ENCODE measurements at regions of chr4 and their contacts with region 1.

Region 1: DNA sequence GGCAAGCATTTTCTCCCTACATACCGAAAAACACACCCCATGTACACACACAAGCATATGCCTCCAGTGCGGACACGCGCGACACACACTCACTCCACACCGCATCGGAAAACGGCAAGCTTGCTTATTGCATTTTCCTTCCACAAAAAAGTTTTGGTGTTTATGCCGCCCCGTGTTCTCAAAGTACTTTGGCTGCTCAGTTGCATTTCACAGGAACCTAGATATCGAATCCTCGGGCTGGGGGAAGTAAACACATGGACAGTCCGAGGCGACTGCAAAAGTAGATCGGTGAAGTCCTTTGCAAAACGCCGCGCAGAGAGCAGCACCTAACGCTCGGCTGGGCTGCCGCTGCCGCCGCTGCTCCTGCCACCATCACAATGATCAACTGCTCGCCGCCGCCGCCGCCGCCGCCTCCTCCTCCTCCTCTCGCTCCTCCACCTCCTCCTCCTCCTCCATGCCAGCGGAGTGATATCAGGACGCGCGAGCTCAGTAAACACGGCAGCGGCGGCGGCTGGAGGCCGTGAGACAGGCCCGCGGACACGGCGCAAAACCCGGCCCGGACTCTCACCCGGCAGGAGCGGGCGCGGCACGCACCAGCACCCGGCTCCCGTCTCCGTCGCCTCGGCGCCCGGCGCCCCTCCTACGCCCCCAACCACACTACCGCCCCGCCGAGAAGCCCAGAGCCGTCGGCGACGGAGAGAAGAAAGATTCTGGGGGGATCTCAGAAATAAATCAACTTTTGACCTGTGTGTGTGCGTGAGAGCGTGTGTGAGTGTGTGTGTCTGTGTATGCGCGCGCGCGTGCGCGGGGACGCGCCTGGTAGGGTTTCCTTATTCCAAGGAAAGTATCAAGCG is at the start of gene MAML3:
- DNase-seq: peak; percentile 95 to 98 (median 98)
- ATAC-seq: peak; percentile 74 to 78
- H3K4me3 ChIP-seq: peak within 1 kb of the TSS; percentile 51
- H3K27ac ChIP-seq: peak within 1 kb of the TSS; percentile 92
- H3K4me1 ChIP-seq: no peaks in the 10 kb centered on the region
- H3K27me3 ChIP-seq: no peaks in the 10 kb centered on the region
- total RNA-seq, gene MAML3: 2.6 to 4.2 (median 3.3) TPM

Region 2: DNA sequence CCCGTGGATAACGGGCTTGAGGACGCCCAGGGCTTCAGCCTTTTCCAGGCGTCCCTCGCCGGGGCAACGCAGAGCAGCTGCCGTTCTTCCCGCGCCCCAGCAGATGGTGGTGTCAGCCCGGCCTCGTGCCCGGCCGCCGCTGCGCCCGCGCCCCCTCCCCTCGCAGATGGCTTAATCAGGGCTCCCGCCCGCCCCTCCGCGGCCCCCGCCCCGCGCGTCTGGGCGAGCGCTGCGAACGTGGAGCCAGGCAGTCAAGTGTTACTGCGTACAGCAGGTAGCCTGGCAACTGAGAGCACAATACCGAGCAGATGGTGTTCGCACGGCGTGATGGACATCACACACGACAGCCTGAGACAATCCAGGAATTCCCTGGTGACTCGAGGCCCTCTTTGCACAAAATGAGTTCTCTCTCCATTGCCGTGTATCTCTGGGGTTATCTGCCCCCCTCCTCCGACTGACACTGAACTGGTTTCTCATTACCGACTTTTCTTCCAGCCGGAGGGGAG is 419.0 kb before region 1 on chr4:
- intact Hi-C with region 1: loop called in 3 of 4 experiments (anchors 5 to 10 kb)
- DNase-seq: peak; percentile 88 to 96 (median 95)
- ATAC-seq: peak; percentile 94 to 95
- H3K4me3 ChIP-seq: peak overlapping the region; percentile 49
- H3K27ac ChIP-seq: peak overlapping the region; percentile 57
- H3K4me1 ChIP-seq: peaks cover 2% of the 10 kb centered on the region
- H3K27me3 ChIP-seq: no peaks in the 10 kb centered on the region

Region 3: GRCh38 chr4:139833151-139833910 is 320.6 kb before region 1 on chr4:
- intact Hi-C with region 1: no loop called
- DNase-seq: no peak
- ATAC-seq: no peak
- H3K4me3 ChIP-seq: no peak overlapping the region
- H3K27ac ChIP-seq: no peak overlapping the region
- H3K4me1 ChIP-seq: no peaks in the 10 kb centered on the region
- H3K27me3 ChIP-seq: no peaks in the 10 kb centered on the region

Region 4: DNA sequence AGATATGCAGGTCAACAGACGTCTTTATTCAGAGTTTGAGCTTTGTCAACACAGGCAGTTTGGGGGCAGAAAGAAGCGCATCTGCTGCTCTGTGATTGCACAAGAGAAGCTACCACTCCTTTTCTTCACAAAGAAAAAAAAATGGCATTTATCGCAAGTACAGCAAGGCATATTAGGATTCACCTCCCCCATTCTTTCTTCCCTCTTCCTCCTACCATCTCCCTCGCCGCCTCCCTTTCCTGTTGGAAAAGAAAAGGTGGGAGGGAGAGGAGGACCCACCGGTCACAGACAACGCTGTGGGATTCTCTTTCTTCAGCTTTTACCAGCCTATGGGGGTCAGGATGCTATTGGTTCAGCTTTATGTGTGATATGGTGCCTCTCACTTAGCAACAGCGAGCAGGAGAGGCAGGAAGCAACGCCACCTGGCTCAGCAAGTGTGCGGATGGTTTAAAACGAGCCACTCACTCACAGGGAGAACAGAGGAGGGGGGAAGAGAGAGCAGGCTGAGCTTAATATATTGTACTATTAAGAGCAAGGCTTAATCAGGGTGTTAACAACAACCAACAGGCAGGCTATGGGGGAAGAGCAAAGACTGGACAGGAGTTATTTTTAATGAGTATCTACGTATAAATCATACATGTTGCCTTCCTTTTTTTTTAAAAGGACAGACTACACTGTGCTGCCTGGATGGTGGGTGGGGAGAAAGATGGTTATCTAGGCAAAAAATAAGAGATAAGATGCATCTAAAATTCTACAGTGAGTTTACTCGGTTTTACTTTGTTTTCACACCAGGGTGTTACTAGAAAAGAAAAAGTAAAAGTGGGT is 104.7 kb before region 1 on chr4:
- intact Hi-C with region 1: loop called in 2 of 4 experiments (anchors 10 kb)
- DNase-seq: peak in 2 of 3 donors; percentile 27 to 52
- ATAC-seq: peak; percentile 72 to 81
- H3K4me3 ChIP-seq: peak overlapping the region; percentile 31
- H3K27ac ChIP-seq: peak overlapping the region; percentile 42
- H3K4me1 ChIP-seq: peaks cover 5% of the 10 kb centered on the region
- H3K27me3 ChIP-seq: no peaks in the 10 kb centered on the region

Region 5: DNA sequence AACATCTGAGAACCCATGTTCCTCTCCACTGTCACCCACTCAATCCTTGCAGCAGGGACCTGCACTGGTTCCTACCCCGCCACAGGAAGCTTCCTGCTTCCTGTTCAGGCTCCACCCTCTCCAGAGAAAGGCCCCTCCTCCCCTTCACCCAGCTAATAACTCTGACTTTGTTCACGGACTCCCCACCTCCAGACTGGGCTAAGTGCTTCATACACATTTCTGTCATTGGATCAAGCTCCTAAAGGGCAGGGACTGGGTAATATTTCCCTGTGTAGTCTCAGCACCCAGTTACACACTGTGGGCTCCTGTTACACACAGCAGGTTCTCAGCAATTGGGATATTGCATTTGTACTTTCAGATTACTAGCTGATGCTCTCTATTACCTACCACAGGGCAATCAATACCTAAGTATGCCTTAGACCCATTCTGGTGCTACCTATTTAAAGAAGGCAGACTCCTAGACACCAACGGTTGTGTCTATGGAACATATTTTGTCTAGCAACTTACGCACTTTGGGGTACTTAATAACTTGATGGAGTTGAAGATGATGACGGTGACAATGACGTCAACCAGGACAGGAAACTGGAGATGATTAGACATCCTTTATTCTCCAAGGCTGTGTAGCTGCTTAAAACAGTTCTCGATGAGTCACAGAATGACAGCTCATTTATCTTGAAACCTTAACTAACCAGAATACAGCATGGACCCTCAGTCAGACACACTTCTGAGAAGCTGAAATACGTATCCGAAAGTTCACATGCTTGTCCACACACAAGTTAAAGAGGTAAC is 58.1 kb before region 1 on chr4:
- intact Hi-C with region 1: loop called in 3 of 4 experiments (anchors 5 to 10 kb)
- DNase-seq: peak; percentile 41 to 64 (median 55)
- ATAC-seq: peak; percentile 45 to 81
- H3K4me3 ChIP-seq: no peak overlapping the region
- H3K27ac ChIP-seq: peak overlapping the region; percentile 66
- H3K4me1 ChIP-seq: peaks cover 19% of the 10 kb centered on the region
- H3K27me3 ChIP-seq: no peaks in the 10 kb centered on the region

Region 6: DNA sequence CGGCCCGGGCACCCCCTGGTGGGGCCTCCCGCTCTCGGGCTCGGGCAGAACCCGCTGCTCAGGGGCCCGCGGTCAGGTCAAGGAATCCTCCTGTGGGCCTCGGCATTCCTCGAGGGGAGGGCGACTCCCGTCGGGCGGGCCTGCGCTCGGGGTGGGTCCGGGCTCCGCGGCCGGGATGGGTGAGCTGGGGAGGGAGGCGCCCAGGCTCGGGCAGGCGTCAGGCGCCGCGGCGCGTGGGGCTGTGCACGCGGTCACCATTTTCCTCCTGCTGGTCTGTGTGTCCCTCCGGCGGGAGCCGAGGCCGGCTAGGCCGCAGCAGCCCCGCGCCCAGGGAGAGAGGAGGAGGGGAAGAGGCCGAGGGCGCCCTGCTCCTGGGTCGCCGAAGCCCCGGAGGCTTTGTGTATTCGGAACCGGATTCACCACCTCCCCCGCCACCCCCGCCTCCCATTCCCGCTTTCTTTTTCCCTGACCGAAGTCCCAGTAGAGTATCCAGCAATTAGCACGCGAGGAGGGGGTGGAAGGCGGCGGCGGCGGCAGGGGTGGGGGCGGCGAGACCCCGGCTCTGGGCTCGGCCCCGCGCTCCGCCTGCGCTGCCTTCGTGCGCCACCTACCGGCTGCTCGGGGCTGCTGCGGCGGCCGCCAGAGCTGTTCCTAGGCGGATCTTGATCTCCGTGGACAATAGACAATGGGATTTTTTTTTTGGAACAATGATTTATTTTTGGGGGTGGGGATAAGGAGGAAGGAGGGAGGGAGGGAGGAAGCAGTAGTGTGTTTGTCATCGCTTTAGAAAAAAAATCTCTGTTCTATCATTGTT is 99.0 kb after region 1 on chr4:
- intact Hi-C with region 1: loop called (anchors 2 to 5 kb)
- DNase-seq: peak; percentile 71 to 91 (median 91)
- ATAC-seq: peak; percentile 92
- H3K4me3 ChIP-seq: peak overlapping the region; percentile 83
- H3K27ac ChIP-seq: peak overlapping the region; percentile 83
- H3K4me1 ChIP-seq: peaks cover 2% of the 10 kb centered on the region
- H3K27me3 ChIP-seq: no peaks in the 10 kb centered on the region

Region 7: GRCh38 chr4:140326395-140326993 is 172.5 kb after region 1 on chr4:
- intact Hi-C with region 1: loop called in 1 of 4 experiments (anchors 10 kb)
- DNase-seq: no peak
- ATAC-seq: peak; percentile 77 to 81
- H3K4me3 ChIP-seq: no peak overlapping the region
- H3K27ac ChIP-seq: no peak overlapping the region
- H3K4me1 ChIP-seq: no peaks in the 10 kb centered on the region
- H3K27me3 ChIP-seq: no peaks in the 10 kb centered on the region

Region 8: DNA sequence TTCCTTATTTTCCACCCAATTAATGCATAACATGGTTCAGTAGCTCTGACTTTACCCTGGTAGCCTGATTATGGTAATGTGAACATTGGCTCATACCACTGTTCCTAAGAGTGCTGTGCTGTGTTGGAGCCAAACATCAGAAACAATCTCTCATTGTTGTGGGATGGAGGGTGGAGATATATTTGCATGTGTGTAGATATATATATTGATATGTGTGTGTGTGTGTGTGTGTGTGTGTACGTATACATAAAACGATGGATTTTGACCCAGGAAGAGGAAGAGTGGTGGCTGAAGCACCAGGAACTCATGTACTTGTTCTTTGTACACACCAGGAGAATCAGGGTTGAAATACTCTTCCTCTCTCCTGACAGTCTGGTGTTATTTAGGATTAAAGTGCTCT is 1730.1 kb after region 1 on chr4:
- intact Hi-C with region 1: no loop called
- DNase-seq: no peak
- ATAC-seq: no peak
- H3K4me3 ChIP-seq: no peak overlapping the region
- H3K27ac ChIP-seq: no peak overlapping the region
- H3K4me1 ChIP-seq: no peaks in the 10 kb centered on the region
- H3K27me3 ChIP-seq: no peaks in the 10 kb centered on the region